Activated CD8-positive, alpha-beta T cell treated with anti-CD3 and anti-CD28 coated beads, Interleukin-2, amount 10 ng/mL, durations not matched to agents 7 days and 5 days (primary cell): ENCODE measurements at regions of chr6 and their contacts with region 1.

Region 1: GRCh38 chr6:31493875-31494694 is 3.9 kb upstream of the MICB start:
- DNase-seq: peak; percentile 87
- ATAC-seq: peak; percentile 62
- H3K4me3 Mint-ChIP-seq: peak overlapping the region; percentile 91
- H3K27ac Mint-ChIP-seq: peak overlapping the region; percentile 95
- H3K4me1 Mint-ChIP-seq: peaks cover 62% of the 10 kb centered on the region
- H3K27me3 Mint-ChIP-seq: no peaks in the 10 kb centered on the region

Region 2: DNA sequence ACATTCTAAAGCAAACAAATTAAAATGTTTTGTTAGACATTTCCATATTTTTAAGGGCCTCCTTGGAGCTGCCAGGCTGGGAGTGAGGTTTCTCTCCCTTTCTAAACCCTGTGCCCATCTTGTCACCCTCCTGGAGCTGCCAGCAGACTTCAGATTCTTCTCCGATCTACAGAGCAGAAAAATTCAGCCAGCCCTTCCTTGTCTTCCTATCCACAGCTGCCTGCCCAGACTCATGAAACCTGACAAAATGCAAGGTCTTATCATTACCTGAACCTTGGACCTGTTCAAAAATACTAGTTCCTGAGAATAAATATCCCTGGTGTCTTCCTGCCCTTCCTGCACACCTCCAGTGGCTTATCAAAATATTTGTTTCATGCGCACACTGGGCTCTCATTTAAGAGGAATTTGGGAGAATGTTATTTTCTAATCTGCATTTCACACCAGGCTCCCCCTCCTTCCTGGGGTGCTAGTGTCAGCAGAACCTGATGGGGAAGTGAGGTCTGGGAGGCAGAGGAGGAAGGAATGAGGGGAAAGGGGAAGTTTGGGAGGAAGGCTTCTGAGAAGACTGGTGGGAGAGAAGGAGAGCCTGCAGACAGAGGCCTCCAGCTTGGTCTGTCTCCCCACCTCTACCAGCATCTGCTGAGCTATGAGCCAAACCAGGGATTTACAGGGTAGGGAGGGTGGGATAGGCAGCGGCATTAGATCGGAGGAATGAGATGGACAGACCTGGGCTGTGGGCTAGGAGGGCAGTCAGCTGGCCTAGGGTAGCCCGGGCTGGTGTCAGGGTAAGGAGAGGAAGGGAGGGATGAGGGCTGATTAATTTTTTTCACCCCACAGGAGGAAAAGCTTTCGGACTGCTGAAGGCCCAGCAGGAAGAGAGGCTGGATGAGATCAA is 120.8 kb after region 1 on chr6 and contains the start of gene AIF1:
- CTCF ChIA-PET with region 1: interaction called, 10 read pairs
- POLR2A ChIA-PET with region 1: no interaction called
- DNase-seq: no peak
- ATAC-seq: no peak
- H3K4me3 Mint-ChIP-seq: peak within 1 kb of the TSS; percentile 94
- H3K27ac Mint-ChIP-seq: peak within 1 kb of the TSS; percentile 96
- H3K4me1 Mint-ChIP-seq: peaks cover 45% of the 10 kb centered on the region
- H3K27me3 Mint-ChIP-seq: no peaks in the 10 kb centered on the region
- total RNA-seq, gene AIF1: 177 TPM